ENCODE measurements at regions of chr1 and their contacts with region 1.

Region 1: DNA sequence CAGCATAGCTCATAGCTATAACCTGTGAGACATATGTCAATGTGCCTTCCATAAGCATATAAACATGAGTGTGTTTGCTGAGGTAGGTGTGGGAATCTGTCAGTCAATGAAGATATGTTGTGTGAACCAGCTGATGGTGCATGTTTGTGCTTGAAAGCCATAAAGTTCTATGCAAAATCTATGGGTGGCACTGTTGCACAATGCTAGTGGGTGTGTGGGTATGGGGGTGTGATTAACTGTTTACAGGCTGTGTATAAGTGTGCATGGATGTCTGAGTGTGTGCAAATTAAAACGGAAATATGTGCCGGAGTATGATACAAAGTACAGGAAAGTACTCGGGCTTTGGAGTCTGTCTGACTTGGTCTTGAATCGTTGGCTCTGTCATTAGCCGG is 1.0 kb upstream of the ATP2B4 start:
- DNase-seq: no peak
- ATAC-seq: peak; percentile 47

Region 2: DNA sequence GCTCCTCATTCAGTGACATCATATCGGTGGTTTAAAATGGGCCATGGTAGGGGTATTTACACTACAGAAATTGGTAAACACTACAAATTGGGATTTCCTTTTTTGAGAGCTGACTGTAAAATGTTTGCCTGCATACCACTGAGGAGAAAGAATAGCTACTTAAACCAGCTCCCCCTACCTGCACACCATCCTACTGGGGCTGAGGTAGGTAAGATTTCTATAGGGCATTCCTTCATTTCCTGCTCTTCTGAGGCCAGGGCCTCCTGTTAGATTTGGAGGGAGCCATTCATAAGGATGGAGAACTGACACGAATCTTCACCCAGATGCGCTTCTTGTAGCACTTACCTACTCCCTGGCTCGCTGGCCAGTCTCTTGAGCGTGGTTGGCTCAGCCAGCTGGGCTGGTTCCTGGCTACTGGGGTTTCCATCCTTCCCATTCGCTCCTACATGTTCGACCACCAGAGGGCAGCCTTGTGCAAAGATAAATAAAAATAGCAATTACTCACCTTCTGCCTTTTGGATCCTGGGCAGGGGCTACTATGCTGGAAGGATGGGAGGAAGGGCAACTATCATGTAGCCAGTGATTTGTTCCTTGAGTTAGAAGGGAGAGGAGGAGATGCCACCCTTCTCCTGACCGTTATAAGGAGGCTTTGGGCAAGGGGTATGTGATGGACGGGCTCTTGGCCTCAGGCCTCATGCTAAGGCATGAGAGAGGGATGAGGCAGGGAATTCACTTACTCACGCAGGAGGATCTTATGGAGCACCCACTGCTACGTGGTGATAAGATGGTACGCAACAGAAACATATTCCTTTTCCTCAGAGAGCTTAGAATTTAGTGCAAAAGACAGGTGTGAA is 121.0 kb before region 1 on chr1:
- intact Hi-C with region 1: loop called (anchors 10 kb)
- DNase-seq: peak; percentile 92
- ATAC-seq: peak; percentile 68

Region 3: DNA sequence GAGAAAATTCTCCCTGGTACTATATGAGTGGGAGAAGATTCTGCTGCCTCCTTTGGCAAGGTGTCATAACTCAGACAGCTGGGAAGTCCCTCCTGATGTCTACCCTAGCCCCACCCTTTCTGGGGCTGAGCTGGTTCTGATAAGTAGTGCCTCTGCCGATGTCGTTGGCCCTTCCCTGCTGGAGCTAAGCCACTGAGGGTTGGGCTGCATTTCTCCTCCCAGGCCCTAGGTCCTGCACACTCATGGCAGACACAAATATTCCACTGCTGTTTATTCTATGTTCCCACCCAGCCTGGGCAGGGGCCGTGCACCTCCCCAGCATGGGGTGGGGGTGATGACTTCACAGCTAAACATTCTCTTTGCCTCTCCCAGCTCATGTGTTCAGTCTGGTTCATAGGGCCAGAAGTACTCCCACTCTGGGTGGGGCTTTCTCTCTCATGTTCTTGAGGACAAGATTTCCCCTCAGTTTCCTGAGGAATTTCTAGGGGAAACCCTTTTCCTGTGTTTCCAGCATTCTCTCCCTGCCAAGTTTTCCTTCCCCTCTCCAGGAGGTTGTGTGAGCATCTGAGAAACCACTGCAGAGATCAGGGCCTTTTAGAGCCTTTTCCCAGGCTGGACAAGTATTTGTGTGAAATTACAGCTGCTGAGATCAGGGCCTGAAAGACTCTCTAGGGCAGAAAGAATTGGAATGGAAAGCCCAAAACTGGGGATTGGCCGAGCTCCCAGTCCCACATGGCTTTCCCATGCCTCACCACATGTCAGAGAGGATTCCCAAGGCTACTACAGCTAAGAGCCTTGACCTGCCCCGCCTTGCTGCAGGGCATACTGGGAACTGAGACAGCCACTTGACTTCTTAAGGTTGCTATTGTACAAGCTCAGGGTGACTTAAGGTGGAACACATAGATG is 67.2 kb after region 1 on chr1:
- intact Hi-C with region 1: loop called (anchors 5 kb)
- DNase-seq: peak; percentile 88
- ATAC-seq: peak; percentile 95

Measured in sciatic nerve (tissue), 2 donors.